PC-3 (cell line): ENCODE measurements at regions of chr1 and their contacts with region 1.

Region 1: GRCh38 chr1:97660431-97661105 is 260.3 kb downstream of the DPYD start:
- DNase-seq: no peak
- ATAC-seq: no peak
- H3K4me3 ChIP-seq: no peak overlapping the region
- H3K27ac ChIP-seq: no peak overlapping the region
- H3K4me1 ChIP-seq: no peaks in the 10 kb centered on the region
- H3K27me3 ChIP-seq: no peaks in the 10 kb centered on the region
- CTCF ChIP-seq: no peak

Region 2: DNA sequence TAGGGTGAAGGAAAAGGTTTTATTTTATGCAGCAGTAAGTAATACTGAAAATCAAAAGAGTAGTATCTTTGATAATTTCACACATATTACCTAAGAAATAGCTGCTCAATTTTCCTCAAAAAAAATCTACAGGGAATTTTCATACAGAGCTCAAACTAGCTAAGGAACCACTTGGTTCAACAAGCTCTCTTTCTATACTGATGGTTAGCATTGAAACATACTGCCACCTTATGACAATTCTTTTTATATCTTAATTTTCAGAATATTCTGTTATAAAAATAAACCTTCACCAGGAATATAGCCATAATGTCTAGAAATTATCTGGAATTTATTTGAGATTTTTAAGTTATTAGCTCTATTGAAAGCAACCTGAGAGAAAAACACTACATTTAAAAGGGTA is 118.2 kb after region 1 on chr1:
- CTCF ChIA-PET with region 1: no interaction called
- POLR2A ChIA-PET with region 1: no interaction called
- intact Hi-C with region 1: loop called (anchors 1 kb)
- DNase-seq: peak; percentile 20
- ATAC-seq: peak; percentile 53
- H3K4me3 ChIP-seq: no peak overlapping the region
- H3K27ac ChIP-seq: no peak overlapping the region
- H3K4me1 ChIP-seq: no peaks in the 10 kb centered on the region
- H3K27me3 ChIP-seq: no peaks in the 10 kb centered on the region
- CTCF ChIP-seq: peak; percentile 41; the same call in 1 of the 2 replicates